CD8-positive, alpha-beta T cell (primary cell): ENCODE measurements at regions of chr9 and their contacts with region 1.

Region 1: DNA sequence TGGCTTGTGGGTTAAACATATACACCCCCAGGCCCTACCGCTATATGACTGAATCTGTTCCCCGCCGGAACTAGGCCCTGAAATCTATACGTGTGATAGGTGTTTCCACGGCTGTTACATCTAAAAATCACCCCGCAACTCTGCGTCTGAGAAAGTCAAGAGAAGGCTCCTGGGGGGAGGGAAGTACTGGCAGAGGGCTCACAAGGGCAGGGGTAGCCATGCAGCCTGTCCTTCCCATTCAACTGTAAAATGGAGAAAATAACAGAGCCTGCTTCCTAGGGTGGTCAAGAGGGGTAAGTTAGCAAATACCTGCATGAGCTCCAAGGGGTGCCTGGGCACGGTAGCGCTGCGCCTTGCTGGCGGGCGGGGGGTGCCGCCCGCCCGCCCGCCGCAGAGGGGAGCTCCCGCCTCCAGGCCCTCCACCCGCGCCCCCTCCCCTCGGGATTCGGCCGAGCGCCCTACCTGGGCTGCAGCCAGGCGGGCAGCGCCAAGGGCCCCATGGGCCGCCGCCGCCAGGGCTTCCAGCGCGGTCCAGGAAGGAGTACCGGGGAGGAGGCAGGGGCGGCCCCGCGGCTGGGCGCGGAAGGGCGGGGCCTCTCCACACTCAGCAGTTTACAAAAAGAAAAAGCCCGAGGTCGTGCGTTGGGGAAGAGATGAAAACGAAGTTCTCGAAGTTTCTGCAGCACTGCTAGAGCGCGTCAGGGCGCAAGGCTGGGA is at the start of gene HACD4:
- DNase-seq: peak; percentile 40 to 83 (median 68)
- ATAC-seq: peak; percentile 82
- H3K4me3 ChIP-seq: peak within 1 kb of the TSS; percentile 75 to 94
- H3K4me3 Mint-ChIP-seq: peak within 1 kb of the TSS; percentile 84
- H3K27ac ChIP-seq: peak within 1 kb of the TSS; percentile 79 to 85
- H3K27ac Mint-ChIP-seq: peak within 1 kb of the TSS; percentile 88
- H3K4me1 ChIP-seq: peaks cover 41% of the 10 kb centered on the region
- H3K4me1 Mint-ChIP-seq: peaks cover 24% of the 10 kb centered on the region
- H3K27me3 ChIP-seq: no peaks in the 10 kb centered on the region
- H3K27me3 Mint-ChIP-seq: no peaks in the 10 kb centered on the region
- CTCF ChIP-seq: no peak
- total RNA-seq, gene HACD4: 5.9 to 6.3 TPM

Region 2: DNA sequence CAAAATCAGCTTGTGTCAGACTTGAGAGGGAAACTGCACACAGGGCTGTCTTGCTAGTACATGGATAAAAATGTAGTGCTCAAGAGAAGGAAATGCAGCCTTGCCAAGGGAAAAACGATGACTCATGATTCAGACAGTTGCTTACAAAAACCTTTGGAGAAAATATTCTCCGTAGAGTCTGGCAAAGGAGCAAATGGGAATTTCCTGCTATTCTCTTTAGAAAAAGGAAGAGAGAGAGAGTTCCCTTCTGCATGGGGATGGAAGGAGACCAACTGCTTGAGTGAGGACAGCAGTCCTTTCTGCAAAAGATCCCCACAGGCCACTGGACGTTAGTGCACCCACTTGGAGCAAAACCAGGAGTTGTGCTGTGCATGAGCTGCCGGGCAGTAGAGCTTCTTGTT is 38.9 kb after region 1 on chr9:
- CTCF ChIA-PET with region 1: no interaction called
- POLR2A ChIA-PET with region 1: no interaction called
- intact Hi-C with region 1: loop called in 1 of 2 experiments (anchors 5 kb)
- DNase-seq: no peak
- ATAC-seq: no peak
- H3K4me3 ChIP-seq: no peak overlapping the region
- H3K4me3 Mint-ChIP-seq: no peak overlapping the region
- H3K27ac ChIP-seq: no peak overlapping the region
- H3K27ac Mint-ChIP-seq: no peak overlapping the region
- H3K4me1 ChIP-seq: no peaks in the 10 kb centered on the region
- H3K4me1 Mint-ChIP-seq: no peaks in the 10 kb centered on the region
- H3K27me3 ChIP-seq: no peaks in the 10 kb centered on the region
- H3K27me3 Mint-ChIP-seq: no peaks in the 10 kb centered on the region
- CTCF ChIP-seq: no peak

Region 3: GRCh38 chr9:21096172-21096900 is 65.1 kb after region 1 on chr9:
- CTCF ChIA-PET with region 1: no interaction called
- POLR2A ChIA-PET with region 1: no interaction called
- intact Hi-C with region 1: loop called (anchors 2 to 5 kb)
- DNase-seq: peak in 5 of 9 experiments; percentile 13 to 90 (median 48)
- ATAC-seq: peak; percentile 97
- H3K4me3 ChIP-seq: peak overlapping the region; percentile 16 to 36
- H3K4me3 Mint-ChIP-seq: peak overlapping the region; percentile 74
- H3K27ac ChIP-seq: peak overlapping the region in 1 of 2 experiments; percentile 84
- H3K27ac Mint-ChIP-seq: peak overlapping the region; percentile 83
- H3K4me1 ChIP-seq: peaks cover 15% of the 10 kb centered on the region
- H3K4me1 Mint-ChIP-seq: peaks cover 36% of the 10 kb centered on the region
- H3K27me3 ChIP-seq: no peaks in the 10 kb centered on the region
- H3K27me3 Mint-ChIP-seq: no peaks in the 10 kb centered on the region
- CTCF ChIP-seq: no peak

Region 4: DNA sequence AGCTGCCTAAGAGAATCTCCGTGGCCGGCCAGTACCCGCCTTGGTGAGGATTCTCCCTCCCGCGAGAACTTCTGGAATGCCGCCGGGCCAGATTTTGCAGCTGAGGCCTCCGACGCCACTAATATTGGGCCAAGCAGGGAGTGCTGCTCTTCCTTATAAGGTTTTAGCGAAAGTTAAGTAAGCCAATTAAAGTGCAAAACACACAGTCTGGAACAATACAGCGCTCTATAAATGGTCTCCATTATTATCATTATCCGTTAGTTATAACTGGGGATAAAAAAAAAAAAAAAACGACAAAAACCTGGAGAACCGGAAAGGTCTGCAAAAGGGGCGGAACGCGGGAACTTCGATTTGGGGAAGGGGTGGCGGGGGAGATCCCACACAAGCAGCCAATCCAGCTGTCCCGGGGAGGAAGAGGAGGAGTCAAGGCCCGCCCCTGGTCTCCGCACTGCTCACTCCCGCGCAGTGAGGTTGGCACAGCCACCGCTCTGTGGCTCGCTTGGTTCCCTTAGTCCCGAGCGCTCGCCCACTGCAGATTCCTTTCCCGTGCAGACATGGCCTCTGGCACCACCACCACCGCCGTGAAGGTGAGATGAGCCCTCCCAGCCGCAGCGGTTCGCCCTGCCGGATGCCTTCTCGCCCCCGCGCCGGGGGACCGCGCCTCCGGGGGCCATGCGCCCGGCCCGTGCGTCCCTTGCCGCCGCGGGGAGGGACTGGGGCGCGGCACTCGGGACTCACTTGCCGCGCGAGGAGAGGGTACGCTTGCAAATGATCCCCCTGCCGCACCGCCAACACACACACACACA is 771.1 kb after region 1 on chr9 and contains the start of gene MTAP:
- CTCF ChIA-PET with region 1: no interaction called
- POLR2A ChIA-PET with region 1: no interaction called
- intact Hi-C with region 1: loop called (anchors 5 to 10 kb)
- DNase-seq: peak; percentile 12 to 80 (median 65)
- ATAC-seq: peak; percentile 74
- H3K4me3 ChIP-seq: peak within 1 kb of the TSS; percentile 80 to 91
- H3K4me3 Mint-ChIP-seq: peak within 1 kb of the TSS; percentile 99
- H3K27ac ChIP-seq: peak within 1 kb of the TSS; percentile 63 to 67
- H3K27ac Mint-ChIP-seq: peak within 1 kb of the TSS; percentile 97
- H3K4me1 ChIP-seq: peaks cover 31% of the 10 kb centered on the region
- H3K4me1 Mint-ChIP-seq: peaks cover 42% of the 10 kb centered on the region
- H3K27me3 ChIP-seq: no peaks in the 10 kb centered on the region
- H3K27me3 Mint-ChIP-seq: peaks cover 5% of the 10 kb centered on the region
- CTCF ChIP-seq: no peak
- total RNA-seq, gene MTAP: 9.9 to 14.3 TPM